ENCODE measurements at regions of chr12 and their contacts with region 1.

Region 1: DNA sequence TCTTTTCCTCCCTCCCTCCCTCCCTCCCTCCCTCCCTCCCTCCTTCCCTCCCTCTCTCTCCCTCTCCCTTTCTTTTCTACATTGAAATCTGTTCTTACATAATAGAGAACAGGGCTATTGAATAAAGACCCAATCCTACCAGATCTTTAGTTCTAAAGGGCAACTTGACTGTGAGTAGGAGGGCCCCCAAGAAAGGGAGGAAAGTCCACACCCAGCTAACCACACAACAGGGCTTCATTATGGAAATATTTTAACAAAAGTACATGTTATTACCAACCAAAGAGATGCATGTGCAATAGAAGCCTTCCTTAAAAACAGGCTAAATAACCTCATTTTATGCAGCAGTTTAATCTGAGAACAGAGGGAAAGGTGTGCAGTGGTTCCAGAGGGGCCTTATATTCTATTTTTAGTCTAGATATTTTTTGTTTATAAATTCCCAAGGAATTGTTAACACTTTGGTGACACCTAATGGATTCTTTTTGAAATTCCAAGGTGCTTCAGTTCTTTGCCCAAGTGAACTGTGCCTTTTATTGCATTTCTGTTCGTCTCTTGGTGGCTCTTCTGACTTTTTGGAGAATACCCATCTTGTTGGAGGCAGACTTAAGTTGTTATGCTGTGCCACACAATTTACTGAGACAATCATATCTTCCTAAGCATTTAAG is 63.0 kb downstream of the GNS start:
- DNase-seq: peak; percentile 36
- H3K27ac ChIP-seq: no peak overlapping the region
- CTCF ChIP-seq: peak; percentile 47

Region 2: GRCh38 chr12:64550755-64551154 is 145.5 kb before region 1 on chr12:
- CTCF ChIA-PET with region 1: interaction called, 57 read pairs
- POLR2A ChIA-PET with region 1: no interaction called
- DNase-seq: no peak
- H3K27ac ChIP-seq: no peak overlapping the region
- CTCF ChIP-seq: no peak

Region 3: GRCh38 chr12:64706306-64706705 is 10.1 kb after region 1 on chr12:
- CTCF ChIA-PET with region 1: interaction called, 15 read pairs
- POLR2A ChIA-PET with region 1: no interaction called
- DNase-seq: no peak
- H3K27ac ChIP-seq: no peak overlapping the region
- CTCF ChIP-seq: no peak

Measured in RWPE1 (cell line).